Heart right ventricle (tissue), 16 donors: ENCODE measurements at regions of chr3 and their contacts with region 1.

Region 1: GRCh38 chr3:81554801-81555200 is 206.6 kb downstream of the GBE1 start:
- DNase-seq: peak in 1 of 2 donors; percentile 54
- ATAC-seq: peak; percentile 83 to 94 (median 91)
- H3K4me3 ChIP-seq: no peak overlapping the region
- H3K27ac ChIP-seq: peak overlapping the region in 8 of 10 donors; percentile 3 to 57 (median 28)
- H3K4me1 ChIP-seq: peaks cover 0 to 38% (median 22%) of the 10 kb centered on the region in 9 donors
- H3K27me3 ChIP-seq: no peaks in the 10 kb centered on the region
- CTCF ChIP-seq: no peak

Region 2: GRCh38 chr3:81490541-81491288 is 64.1 kb before region 1 on chr3:
- intact Hi-C with region 1: loop called in 1 of 10 experiments (anchors 5 kb)
- DNase-seq: peak; percentile 21 to 81
- ATAC-seq: peak in 7 of 8 donors; percentile 81 to 92 (median 90)
- H3K4me3 ChIP-seq: no peak overlapping the region
- H3K27ac ChIP-seq: peak overlapping the region in 2 of 10 donors; percentile 21 to 66
- H3K4me1 ChIP-seq: peaks cover 0 to 18% (median 8%) of the 10 kb centered on the region in 9 donors
- H3K27me3 ChIP-seq: no peaks in the 10 kb centered on the region
- CTCF ChIP-seq: peak; percentile 53 to 83 (median 73)